ENCODE measurements at regions of chr2 and their contacts with region 1.

Region 1: GRCh38 chr2:230781130-230781797 is 68.6 kb downstream of the CAB39 start:
- DNase-seq: no peak
- ATAC-seq: peak; percentile 82
- H3K4me3 ChIP-seq: no peak overlapping the region
- H3K27ac ChIP-seq: peak overlapping the region; percentile 26; the same call in 1 of the 2 replicates
- H3K4me1 ChIP-seq: peaks cover 30% of the 10 kb centered on the region
- H3K27me3 ChIP-seq: no peaks in the 10 kb centered on the region
- CTCF ChIP-seq: no peak

Region 2: DNA sequence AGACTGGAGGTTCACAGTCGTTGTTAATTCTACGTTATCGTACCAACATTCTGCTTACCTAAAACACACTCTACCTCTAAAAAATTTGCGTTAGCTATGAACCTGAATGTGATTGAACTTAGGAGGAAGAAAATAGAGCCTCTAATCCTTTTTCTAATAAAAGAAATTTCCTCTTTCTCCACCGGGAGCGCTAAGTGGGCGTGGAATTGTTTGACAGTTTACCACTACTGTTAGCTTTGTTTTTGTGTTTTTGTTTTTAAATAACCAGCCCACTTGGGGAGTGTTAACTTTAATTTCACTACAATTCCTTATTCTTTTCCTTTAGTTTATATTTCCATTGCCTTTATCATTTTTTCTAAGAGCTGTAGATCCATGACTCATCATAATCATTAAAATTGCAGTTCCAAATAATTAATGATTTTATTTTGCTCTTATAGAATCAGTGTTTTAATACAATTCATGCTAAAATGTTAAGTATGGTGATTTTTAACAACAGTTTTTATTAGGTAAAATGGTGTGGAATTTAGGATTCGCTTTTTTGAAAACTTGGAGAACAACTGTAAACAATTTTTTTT is 28.5 kb after region 1 on chr2:
- CTCF ChIA-PET with region 1: interaction called, 11 read pairs
- POLR2A ChIA-PET with region 1: no interaction called
- in situ Hi-C with region 1: no loop called
- intact Hi-C with region 1: no loop called
- DNase-seq: no peak
- ATAC-seq: no peak
- H3K4me3 ChIP-seq: no peak overlapping the region
- H3K27ac ChIP-seq: no peak overlapping the region
- H3K4me1 ChIP-seq: no peaks in the 10 kb centered on the region
- H3K27me3 ChIP-seq: no peaks in the 10 kb centered on the region
- CTCF ChIP-seq: peak; percentile 45; the same call in 1 of the 2 replicates